Mammary epithelial cell (primary cell): ENCODE measurements at regions of chr21 and their contacts with region 1.

Region 1: GRCh38 chr21:27158967-27159366 is 192.1 kb upstream of the ADAMTS5 start:
- DNase-seq: no peak
- H3K4me3 ChIP-seq: no peak overlapping the region
- H3K27ac ChIP-seq: no peak overlapping the region
- H3K4me1 ChIP-seq: no peaks in the 10 kb centered on the region
- H3K27me3 ChIP-seq: no peaks in the 10 kb centered on the region
- CTCF ChIP-seq: no peak

Region 2: GRCh38 chr21:26845066-26845758 is 313.8 kb before region 1 on chr21 and contains the start of gene ADAMTS1:
- CTCF ChIA-PET with region 1: no interaction called
- dilution Hi-C with region 1: no loop called
- in situ Hi-C with region 1: no loop called
- intact Hi-C with region 1: no loop called
- DNase-seq: peak; percentile 72
- H3K4me3 ChIP-seq: peak within 1 kb of the TSS; percentile 70 to 85 (median 74)
- H3K27ac ChIP-seq: peak within 1 kb of the TSS; percentile 80
- H3K4me1 ChIP-seq: peaks cover 27% of the 10 kb centered on the region
- H3K27me3 ChIP-seq: no peaks in the 10 kb centered on the region
- CTCF ChIP-seq: peak in 1 of 2 donors; percentile 10
- total RNA-seq, gene ADAMTS1: 61.9 to 339 TPM

Region 3: DNA sequence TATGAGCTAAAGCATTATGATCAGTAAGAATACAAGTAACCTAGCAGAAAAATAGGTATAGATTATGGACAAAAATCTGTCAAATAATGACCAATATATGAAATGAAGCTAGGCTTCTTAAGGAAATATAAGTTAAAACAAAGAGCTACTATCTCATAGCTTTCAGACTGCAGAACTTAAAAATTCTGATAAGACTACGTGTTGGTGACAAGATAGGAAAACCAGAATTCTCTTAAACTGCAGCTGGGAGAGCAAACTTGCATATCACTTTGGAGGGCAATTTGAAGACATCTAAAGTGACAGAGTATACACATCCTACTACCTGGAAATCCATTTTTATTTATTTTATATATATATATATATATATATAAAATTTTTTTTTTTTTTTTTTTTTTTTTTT is 1768.2 kb after region 1 on chr21:
- CTCF ChIA-PET with region 1: interaction called, 10 read pairs
- dilution Hi-C with region 1: no loop called
- in situ Hi-C with region 1: no loop called
- intact Hi-C with region 1: no loop called
- DNase-seq: no peak
- H3K4me3 ChIP-seq: no peak overlapping the region
- H3K27ac ChIP-seq: no peak overlapping the region
- H3K4me1 ChIP-seq: no peaks in the 10 kb centered on the region
- H3K27me3 ChIP-seq: no peaks in the 10 kb centered on the region
- CTCF ChIP-seq: no peak